ENCODE measurements at regions of chr13 and their contacts with region 1.

Region 1: DNA sequence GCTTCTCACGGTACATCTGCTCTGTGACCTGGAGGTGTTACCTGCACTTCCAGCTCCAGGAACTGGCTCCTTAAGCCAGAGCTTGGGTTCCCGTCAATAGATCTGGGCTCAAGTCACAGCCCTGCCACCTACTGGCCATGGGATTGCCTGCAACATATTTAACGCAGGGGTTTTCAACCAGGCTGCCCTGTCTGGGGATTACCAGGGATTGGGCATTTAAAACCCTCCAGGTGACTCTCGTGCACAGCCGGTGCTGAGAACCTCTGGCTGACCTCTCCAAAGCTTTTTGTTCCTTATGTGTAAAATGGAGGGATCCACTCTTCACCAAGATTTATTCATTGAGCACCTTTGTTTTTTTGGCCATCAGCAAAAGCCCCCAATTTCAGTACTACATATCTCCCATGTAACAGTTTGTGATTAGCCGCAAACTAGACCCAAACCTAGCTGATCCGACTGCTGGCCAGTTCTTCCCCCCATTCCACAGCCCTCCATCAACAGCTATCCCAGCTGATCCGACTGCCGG is 76.6 kb upstream of the STK24 start:
- DNase-seq: peak; percentile 92 to 93
- H3K4me3 ChIP-seq: no peak overlapping the region
- H3K4me3 Mint-ChIP-seq: peak overlapping the region; percentile 31
- H3K27ac Mint-ChIP-seq: peak overlapping the region; percentile 96
- H3K4me1 ChIP-seq: peaks cover 60% of the 10 kb centered on the region
- H3K4me1 Mint-ChIP-seq: peaks cover 70% of the 10 kb centered on the region
- H3K27me3 ChIP-seq: no peaks in the 10 kb centered on the region
- H3K27me3 Mint-ChIP-seq: no peaks in the 10 kb centered on the region
- CTCF ChIP-seq: peak; percentile 89 to 95

Region 2: GRCh38 chr13:98033277-98034247 is 620.0 kb before region 1 on chr13:
- CTCF ChIA-PET with region 1: no interaction called
- POLR2A ChIA-PET with region 1: no interaction called
- intact Hi-C with region 1: loop called (anchors 5 kb)
- DNase-seq: peak; percentile 57 to 61
- H3K4me3 ChIP-seq: 0 out of 2 replicates have a peak overlapping the region, but pooled peaks have one; percentile 6
- H3K4me3 Mint-ChIP-seq: peak overlapping the region; percentile 56
- H3K27ac Mint-ChIP-seq: no peak overlapping the region
- H3K4me1 ChIP-seq: peaks cover 9% of the 10 kb centered on the region
- H3K4me1 Mint-ChIP-seq: no peaks in the 10 kb centered on the region
- H3K27me3 ChIP-seq: no peaks in the 10 kb centered on the region
- H3K27me3 Mint-ChIP-seq: no peaks in the 10 kb centered on the region
- CTCF ChIP-seq: peak; percentile 42 to 57

Region 3: GRCh38 chr13:98484289-98485219 is 169.0 kb before region 1 on chr13:
- CTCF ChIA-PET with region 1: interaction called, 20 read pairs
- POLR2A ChIA-PET with region 1: interaction called, 11 read pairs
- intact Hi-C with region 1: loop called (anchors 1 kb)
- DNase-seq: peak; percentile 88 to 89
- H3K4me3 ChIP-seq: peak overlapping the region; percentile 10; the same call in 1 of the 2 replicates
- H3K4me3 Mint-ChIP-seq: peak overlapping the region; percentile 66
- H3K27ac Mint-ChIP-seq: peak overlapping the region; percentile 94
- H3K4me1 ChIP-seq: peaks cover 35% of the 10 kb centered on the region
- H3K4me1 Mint-ChIP-seq: peaks cover 45% of the 10 kb centered on the region
- H3K27me3 ChIP-seq: no peaks in the 10 kb centered on the region
- H3K27me3 Mint-ChIP-seq: no peaks in the 10 kb centered on the region
- CTCF ChIP-seq: no peak

Region 4: GRCh38 chr13:98570929-98571372 is 82.6 kb before region 1 on chr13:
- CTCF ChIA-PET with region 1: interaction called, 13 read pairs
- POLR2A ChIA-PET with region 1: no interaction called
- intact Hi-C with region 1: loop called (anchors 1 kb)
- DNase-seq: no peak
- H3K4me3 ChIP-seq: no peak overlapping the region
- H3K4me3 Mint-ChIP-seq: peak overlapping the region; percentile 39
- H3K27ac Mint-ChIP-seq: peak overlapping the region; percentile 60
- H3K4me1 ChIP-seq: peaks cover 85% of the 10 kb centered on the region
- H3K4me1 Mint-ChIP-seq: peaks cover 88% of the 10 kb centered on the region
- H3K27me3 ChIP-seq: no peaks in the 10 kb centered on the region
- H3K27me3 Mint-ChIP-seq: no peaks in the 10 kb centered on the region
- CTCF ChIP-seq: no peak

Region 5: GRCh38 chr13:98582946-98583345 is 70.6 kb before region 1 on chr13:
- CTCF ChIA-PET with region 1: interaction called, 8 read pairs
- POLR2A ChIA-PET with region 1: interaction called, 6 read pairs
- intact Hi-C with region 1: loop called (anchors 1 kb)
- DNase-seq: peak; percentile 82 to 90
- H3K4me3 ChIP-seq: no peak overlapping the region
- H3K4me3 Mint-ChIP-seq: peak overlapping the region; percentile 34
- H3K27ac Mint-ChIP-seq: peak overlapping the region; percentile 75
- H3K4me1 ChIP-seq: peaks cover 78% of the 10 kb centered on the region
- H3K4me1 Mint-ChIP-seq: peaks cover 58% of the 10 kb centered on the region
- H3K27me3 ChIP-seq: no peaks in the 10 kb centered on the region
- H3K27me3 Mint-ChIP-seq: no peaks in the 10 kb centered on the region
- CTCF ChIP-seq: no peak

Region 6: DNA sequence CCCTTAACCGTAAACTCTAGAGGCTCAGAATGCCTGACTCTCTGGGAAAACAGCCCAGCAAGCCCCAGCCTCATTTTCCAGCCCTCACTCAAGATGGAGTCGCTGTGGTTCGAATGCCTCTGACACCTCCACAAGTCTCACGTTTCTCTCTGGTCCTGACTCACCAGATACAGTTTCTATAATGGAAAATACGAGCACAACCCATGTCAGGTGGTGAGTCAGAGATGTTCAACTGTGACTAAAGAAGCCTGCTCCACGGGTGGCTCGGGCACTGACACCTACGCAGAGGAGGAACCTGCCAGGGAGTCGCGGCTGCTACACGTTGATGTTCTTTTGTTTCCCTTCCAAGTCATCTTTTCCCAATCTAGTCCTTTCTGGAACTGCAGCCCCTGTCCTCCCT is 10.5 kb after region 1 on chr13:
- CTCF ChIA-PET with region 1: interaction called, 16 read pairs
- POLR2A ChIA-PET with region 1: no interaction called
- intact Hi-C with region 1: loop called (anchors 1 kb)
- DNase-seq: no peak
- H3K4me3 ChIP-seq: no peak overlapping the region
- H3K4me3 Mint-ChIP-seq: peak overlapping the region; percentile 38
- H3K27ac Mint-ChIP-seq: peak overlapping the region; percentile 54
- H3K4me1 ChIP-seq: peaks cover 45% of the 10 kb centered on the region
- H3K4me1 Mint-ChIP-seq: peaks cover 46% of the 10 kb centered on the region
- H3K27me3 ChIP-seq: no peaks in the 10 kb centered on the region
- H3K27me3 Mint-ChIP-seq: no peaks in the 10 kb centered on the region
- CTCF ChIP-seq: no peak